ENCODE measurements at regions of chr3 and their contacts with region 1.

Region 1: GRCh38 chr3:197906023-197906849 is 43.8 kb upstream of the RPL35A start:
- DNase-seq: peak; percentile 49 to 84
- ATAC-seq: peak; percentile 97 to 99
- H3K4me3 ChIP-seq: no peak overlapping the region
- H3K27ac ChIP-seq: no peak overlapping the region
- H3K4me1 ChIP-seq: no peaks in the 10 kb centered on the region
- CTCF ChIP-seq: peak; percentile 75
- EP300 ChIP-seq: no peak
- POLR2A ChIP-seq: no peak
- RAD21 ChIP-seq: peak; percentile 80 to 89

Region 2: DNA sequence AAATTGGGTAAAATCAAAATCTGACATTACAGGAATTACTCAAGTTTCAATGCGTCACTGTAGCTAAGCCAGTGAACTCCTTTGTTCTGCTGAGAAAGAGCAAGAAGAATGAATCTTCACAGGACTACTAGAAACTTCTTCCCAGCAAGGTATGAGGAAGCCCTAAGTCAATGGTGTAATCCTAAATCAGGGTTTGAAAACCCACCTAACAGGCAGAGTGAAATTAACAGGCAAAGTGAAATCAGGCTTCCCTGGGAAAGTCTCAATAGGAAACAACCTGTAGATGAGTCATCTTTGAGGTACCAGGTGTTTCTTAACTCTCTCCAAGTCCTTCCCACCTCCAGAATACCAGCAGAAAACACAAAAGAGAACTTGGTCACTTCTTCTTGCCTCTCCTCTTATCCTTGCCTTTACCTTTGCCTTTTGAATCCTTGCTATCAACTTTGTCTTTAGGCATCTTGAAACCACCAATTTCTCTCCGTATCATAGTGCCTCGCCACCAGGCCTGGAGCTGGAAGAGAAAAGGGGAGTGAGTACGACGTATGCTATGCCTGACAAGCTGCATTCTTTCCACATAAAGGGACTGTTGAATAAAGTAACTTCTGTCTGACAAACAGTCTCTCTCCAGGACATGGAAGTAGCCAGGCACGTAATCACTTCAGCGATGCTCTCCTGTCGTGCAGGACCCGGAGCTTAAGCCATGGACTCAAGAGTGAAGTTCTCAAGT is 16.9 kb before region 1 on chr3:
- CTCF ChIA-PET with region 1: interaction called, 16 read pairs
- POLR2A ChIA-PET with region 1: no interaction called
- DNase-seq: no peak
- ATAC-seq: no peak
- H3K4me3 ChIP-seq: no peak overlapping the region
- H3K27ac ChIP-seq: no peak overlapping the region
- H3K4me1 ChIP-seq: no peaks in the 10 kb centered on the region
- CTCF ChIP-seq: no peak
- EP300 ChIP-seq: no peak
- POLR2A ChIP-seq: no peak
- RAD21 ChIP-seq: no peak

Region 3: GRCh38 chr3:197936819-197937384 is 30.7 kb after region 1 on chr3:
- CTCF ChIA-PET with region 1: interaction called, 13 read pairs
- POLR2A ChIA-PET with region 1: no interaction called
- DNase-seq: no peak
- ATAC-seq: no peak
- H3K4me3 ChIP-seq: no peak overlapping the region
- H3K27ac ChIP-seq: no peak overlapping the region
- H3K4me1 ChIP-seq: no peaks in the 10 kb centered on the region
- CTCF ChIP-seq: no peak
- EP300 ChIP-seq: no peak
- POLR2A ChIP-seq: no peak
- RAD21 ChIP-seq: no peak

Region 4: GRCh38 chr3:197942956-197943556 is 36.8 kb after region 1 on chr3:
- CTCF ChIA-PET with region 1: interaction called, 23 read pairs
- POLR2A ChIA-PET with region 1: no interaction called
- DNase-seq: peak in 1 of 2 experiments; percentile 47
- ATAC-seq: peak; percentile 62 to 82; a peak in 4 of 6 replicates
- H3K4me3 ChIP-seq: no peak overlapping the region
- H3K27ac ChIP-seq: no peak overlapping the region
- H3K4me1 ChIP-seq: no peaks in the 10 kb centered on the region
- CTCF ChIP-seq: peak; percentile 60
- EP300 ChIP-seq: no peak
- POLR2A ChIP-seq: no peak
- RAD21 ChIP-seq: peak; percentile 33 to 34; a peak in 3 of 5 replicates

Region 5: GRCh38 chr3:198032039-198032936 is 126.1 kb after region 1 on chr3:
- CTCF ChIA-PET with region 1: no interaction called
- POLR2A ChIA-PET with region 1: no interaction called
- DNase-seq: no peak
- ATAC-seq: no peak
- H3K4me3 ChIP-seq: no peak overlapping the region
- H3K27ac ChIP-seq: no peak overlapping the region
- H3K4me1 ChIP-seq: no peaks in the 10 kb centered on the region
- CTCF ChIP-seq: no peak
- EP300 ChIP-seq: no peak
- POLR2A ChIP-seq: no peak
- RAD21 ChIP-seq: no peak